ENCODE measurements at regions of chr16 and their contacts with region 1.

Region 1: GRCh38 chr16:1308977-1309885 is at the start of gene UBE2I:
- DNase-seq: peak; percentile 98
- H3K4me3 Mint-ChIP-seq: peak within 1 kb of the TSS; percentile 94
- H3K27ac Mint-ChIP-seq: peak within 1 kb of the TSS; percentile 99
- H3K4me1 Mint-ChIP-seq: peaks cover 41% of the 10 kb centered on the region
- H3K27me3 Mint-ChIP-seq: no peaks in the 10 kb centered on the region
- total RNA-seq, gene UBE2I: 273 to 297 TPM

Region 2: DNA sequence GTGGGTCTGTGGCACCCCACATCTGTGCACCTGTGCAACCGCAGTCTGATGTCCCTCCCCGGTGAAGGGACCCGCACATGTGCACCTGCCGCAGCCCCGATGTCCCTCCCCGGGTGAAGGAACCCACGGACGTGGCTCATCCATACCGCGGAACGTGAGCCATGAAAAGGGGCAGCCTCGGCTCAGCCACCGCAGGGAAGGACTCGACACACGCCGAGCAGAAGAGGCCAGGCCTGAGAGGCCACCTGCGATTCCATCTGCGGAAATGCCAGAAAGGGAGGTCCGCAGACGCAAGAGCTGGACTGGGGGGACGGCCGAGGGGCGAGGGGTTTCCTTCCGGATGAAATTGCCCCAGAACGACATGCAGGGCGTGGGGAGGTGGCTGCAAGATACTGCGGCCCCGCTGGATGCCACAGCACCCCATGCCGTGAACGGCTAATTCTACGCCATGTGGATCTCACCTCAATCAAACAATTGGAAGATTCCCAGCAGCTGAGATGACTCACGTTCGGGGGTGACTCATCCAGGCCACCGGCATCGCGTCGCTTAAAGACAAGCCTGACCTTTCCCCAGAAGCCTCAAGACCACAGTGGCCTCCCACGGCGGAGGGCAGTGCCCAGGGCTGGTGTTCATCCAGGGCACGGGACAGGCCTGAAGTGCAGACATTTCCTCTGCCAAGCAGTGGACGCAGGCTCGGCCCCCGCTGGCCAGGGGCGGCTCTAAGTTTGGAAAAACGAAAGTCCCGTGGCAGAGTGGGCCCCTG is 306.7 kb before region 1 on chr16:
- CTCF ChIA-PET with region 1: no interaction called
- intact Hi-C with region 1: no loop called
- DNase-seq: peak; percentile 94
- H3K4me3 Mint-ChIP-seq: no peak overlapping the region
- H3K27ac Mint-ChIP-seq: peak overlapping the region; percentile 72
- H3K4me1 Mint-ChIP-seq: peaks cover 63% of the 10 kb centered on the region
- H3K27me3 Mint-ChIP-seq: no peaks in the 10 kb centered on the region

Region 3: DNA sequence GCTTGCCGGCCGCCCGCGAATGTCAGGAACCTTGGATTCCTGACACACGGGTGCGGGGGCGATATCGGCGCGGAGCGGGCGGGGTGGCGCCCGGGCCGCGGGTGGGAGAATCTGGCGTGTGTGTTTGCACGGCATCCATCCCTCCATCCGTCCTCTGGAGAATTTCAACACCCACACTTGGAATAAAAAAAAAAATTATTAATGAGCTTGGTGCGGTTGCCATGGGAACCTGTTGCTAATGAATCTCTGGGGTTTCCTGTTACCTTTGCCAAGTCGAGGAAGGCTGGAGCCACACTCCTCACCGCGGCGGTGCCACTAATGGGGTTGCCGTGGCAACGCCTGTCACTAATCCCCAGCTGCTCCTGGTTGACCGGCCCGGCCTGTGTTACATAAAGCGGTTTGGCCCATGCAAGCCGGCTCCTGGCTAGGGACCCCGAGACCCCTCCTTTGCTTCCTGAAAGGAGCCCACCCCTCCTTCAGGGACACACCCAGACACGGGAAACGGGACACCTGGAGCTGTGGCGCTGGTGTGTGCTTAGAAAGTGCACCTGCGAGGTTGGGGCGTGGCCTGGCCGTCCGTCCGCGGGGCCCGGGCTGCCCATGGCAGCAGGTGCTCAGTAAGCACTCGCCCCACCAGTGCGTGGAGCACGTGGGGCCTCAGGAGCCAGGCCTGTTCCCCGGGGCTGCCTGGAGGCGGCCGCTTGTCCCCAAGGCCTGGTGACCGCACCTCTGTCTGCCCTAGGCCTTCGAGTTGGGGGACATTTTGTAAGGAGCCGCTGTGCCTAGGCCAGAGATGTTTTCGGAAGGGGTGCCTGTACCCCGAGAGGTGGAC is 141.7 kb before region 1 on chr16:
- CTCF ChIA-PET with region 1: no interaction called
- intact Hi-C with region 1: no loop called
- DNase-seq: no peak
- H3K4me3 Mint-ChIP-seq: no peak overlapping the region
- H3K27ac Mint-ChIP-seq: no peak overlapping the region
- H3K4me1 Mint-ChIP-seq: no peaks in the 10 kb centered on the region
- H3K27me3 Mint-ChIP-seq: no peaks in the 10 kb centered on the region

Region 4: DNA sequence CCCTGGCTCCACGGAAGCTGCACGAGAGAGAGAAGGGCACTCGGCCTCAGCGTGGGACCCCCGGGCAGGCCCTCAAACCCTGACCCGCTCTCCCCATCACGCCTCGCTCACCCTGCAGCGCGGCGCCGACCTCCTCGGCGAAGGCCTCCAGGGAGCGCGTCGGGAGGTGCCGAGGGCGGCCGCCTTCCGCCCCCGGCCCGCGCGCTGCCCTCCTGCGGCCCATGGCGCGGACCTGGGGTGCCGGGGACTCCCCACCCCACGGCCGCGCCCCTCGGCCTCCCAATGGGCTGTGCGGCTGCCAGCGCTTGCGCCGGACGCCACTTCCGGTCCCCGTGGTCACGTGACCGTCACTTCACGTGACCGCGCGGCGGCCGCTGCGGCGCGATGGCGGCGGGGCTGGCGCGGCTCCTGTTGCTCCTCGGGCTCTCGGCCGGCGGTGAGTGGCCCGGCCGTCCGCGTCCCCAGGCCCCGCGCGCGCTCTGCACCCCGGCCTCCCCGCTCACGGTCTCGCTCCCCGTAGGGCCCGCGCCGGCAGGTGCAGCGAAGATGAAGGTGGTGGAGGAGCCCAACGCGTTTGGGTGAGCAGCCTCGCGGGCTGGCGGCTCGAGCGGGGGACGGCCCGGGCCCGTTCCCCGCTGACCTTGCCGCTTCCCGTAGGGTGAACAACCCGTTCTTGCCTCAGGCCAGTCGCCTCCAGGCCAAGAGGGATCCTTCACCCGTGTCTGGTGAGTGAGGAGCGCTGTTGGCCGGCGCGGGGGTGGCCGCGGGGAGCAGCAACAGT is 42.5 kb after region 1 on chr16 and contains the starts of genes GNPTG and TSR3:
- CTCF ChIA-PET with region 1: no interaction called
- intact Hi-C with region 1: loop called (anchors 1 kb)
- DNase-seq: peak; percentile 82
- H3K4me3 Mint-ChIP-seq: peak within 1 kb of the TSS; percentile 80
- H3K27ac Mint-ChIP-seq: peak within 1 kb of the TSS; percentile 68
- H3K4me1 Mint-ChIP-seq: peaks cover 33% of the 10 kb centered on the region
- H3K27me3 Mint-ChIP-seq: no peaks in the 10 kb centered on the region
- total RNA-seq, gene GNPTG: 15.9 to 17.3 TPM
- total RNA-seq, gene TSR3: 48.5 to 50.7 TPM

Region 5: GRCh38 chr16:1378804-1379303 is 69.6 kb after region 1 on chr16:
- CTCF ChIA-PET with region 1: no interaction called
- intact Hi-C with region 1: loop called (anchors 2 kb)
- DNase-seq: peak; percentile 82
- H3K4me3 Mint-ChIP-seq: peak overlapping the region; percentile 83
- H3K27ac Mint-ChIP-seq: peak overlapping the region; percentile 93
- H3K4me1 Mint-ChIP-seq: peaks cover 17% of the 10 kb centered on the region
- H3K27me3 Mint-ChIP-seq: no peaks in the 10 kb centered on the region

Region 6: GRCh38 chr16:1474796-1475551 is 165.7 kb after region 1 on chr16 and contains the start of gene CLCN7:
- CTCF ChIA-PET with region 1: no interaction called
- intact Hi-C with region 1: no loop called
- DNase-seq: peak; percentile 90
- H3K4me3 Mint-ChIP-seq: peak within 1 kb of the TSS; percentile 85
- H3K27ac Mint-ChIP-seq: peak within 1 kb of the TSS; percentile 82
- H3K4me1 Mint-ChIP-seq: peaks cover 36% of the 10 kb centered on the region
- H3K27me3 Mint-ChIP-seq: no peaks in the 10 kb centered on the region
- total RNA-seq, gene CLCN7: 31.7 to 34.5 TPM

Region 7: GRCh38 chr16:1543085-1543896 is 234.1 kb after region 1 on chr16:
- CTCF ChIA-PET with region 1: no interaction called
- intact Hi-C with region 1: loop called (anchors 2 kb)
- DNase-seq: peak; percentile 84
- H3K4me3 Mint-ChIP-seq: peak overlapping the region; percentile 60
- H3K27ac Mint-ChIP-seq: peak overlapping the region; percentile 89
- H3K4me1 Mint-ChIP-seq: peaks cover 79% of the 10 kb centered on the region
- H3K27me3 Mint-ChIP-seq: no peaks in the 10 kb centered on the region

Region 8: DNA sequence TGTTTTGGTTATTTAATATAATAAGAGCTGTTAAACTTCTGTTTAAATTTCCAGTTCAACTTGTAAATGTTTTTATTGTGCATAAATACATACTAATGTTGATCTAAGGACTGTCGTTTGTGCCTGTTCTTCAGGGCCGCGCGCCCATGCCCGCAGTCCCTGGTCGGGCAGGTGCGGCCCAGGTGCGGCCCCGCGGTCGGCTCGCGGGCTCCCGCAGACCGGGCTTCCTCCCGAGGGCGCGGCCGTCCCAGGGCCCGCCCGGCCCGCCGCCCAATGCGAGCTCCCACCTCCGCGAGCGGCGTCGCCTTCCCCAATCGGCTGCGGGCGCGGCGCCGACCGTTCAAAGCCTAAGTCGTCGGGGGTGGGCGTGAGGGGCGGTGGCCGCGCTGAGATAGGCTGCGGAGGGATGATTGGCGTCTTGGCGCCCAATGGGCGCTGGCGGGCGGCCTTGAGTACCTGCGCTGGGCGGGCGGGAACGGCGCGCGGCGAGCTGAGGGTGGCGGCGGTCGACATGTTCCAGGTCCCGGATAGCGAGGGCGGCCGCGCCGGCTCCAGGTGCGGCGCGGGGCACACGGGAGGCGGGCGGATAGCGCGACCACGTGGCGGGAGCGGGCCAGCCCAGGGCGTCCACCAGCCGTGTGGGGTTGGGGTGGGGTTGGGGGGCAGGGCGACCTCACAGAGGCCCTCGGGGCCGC is 368.7 kb after region 1 on chr16 and contains the start of gene JPT2:
- CTCF ChIA-PET with region 1: no interaction called
- intact Hi-C with region 1: no loop called
- DNase-seq: peak; percentile 98
- H3K4me3 Mint-ChIP-seq: peak within 1 kb of the TSS; percentile 95
- H3K27ac Mint-ChIP-seq: peak within 1 kb of the TSS; percentile 79
- H3K4me1 Mint-ChIP-seq: peaks cover 35% of the 10 kb centered on the region
- H3K27me3 Mint-ChIP-seq: no peaks in the 10 kb centered on the region
- total RNA-seq, gene JPT2: 54.0 to 69.4 TPM

Region 9: DNA sequence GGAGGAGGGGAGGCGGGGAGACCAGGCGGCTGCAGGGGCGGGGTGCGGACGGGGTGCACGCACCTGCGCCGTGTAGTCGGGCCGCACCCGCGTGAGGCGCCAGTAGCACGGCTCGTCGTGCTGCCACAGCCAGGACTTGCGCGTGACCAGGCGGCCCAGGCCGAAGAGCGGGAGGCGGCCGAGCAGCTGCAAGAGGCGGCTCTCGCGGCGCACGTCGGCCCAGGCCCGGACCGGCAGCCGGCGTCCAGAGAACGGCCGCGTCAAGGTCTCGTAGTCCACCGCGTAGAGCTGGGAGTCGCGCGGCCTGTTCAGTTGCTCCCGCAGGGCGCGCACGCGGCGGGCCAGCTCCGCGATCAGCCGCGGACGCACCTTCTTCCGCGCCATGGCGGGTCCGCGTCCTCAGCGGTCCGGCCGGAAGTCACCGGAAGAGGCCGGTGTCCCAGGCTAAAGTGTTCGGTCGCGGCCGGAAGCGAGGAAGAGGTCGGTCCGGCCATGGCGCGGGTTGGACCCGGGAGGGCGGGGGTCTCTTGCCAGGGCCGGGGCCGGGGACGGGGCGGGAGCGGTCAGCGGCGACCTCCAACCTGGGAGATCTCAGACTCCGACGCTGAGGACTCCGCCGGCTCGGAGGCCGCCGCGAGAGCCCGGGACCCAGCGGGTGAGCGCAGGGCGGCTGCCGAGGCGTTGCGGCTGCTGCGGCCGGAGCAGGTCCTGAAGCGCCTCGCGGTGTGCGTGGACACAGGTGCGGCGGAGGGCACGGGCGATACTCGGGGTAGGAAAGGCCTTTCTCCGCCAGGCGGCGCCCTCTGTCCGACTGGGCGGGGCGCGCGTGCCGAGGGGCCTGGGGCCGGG is 463.7 kb after region 1 on chr16 and contains the starts of genes EME2 and MRPS34:
- CTCF ChIA-PET with region 1: no interaction called
- intact Hi-C with region 1: loop called (anchors 2 kb)
- DNase-seq: peak; percentile 85
- H3K4me3 Mint-ChIP-seq: peak within 1 kb of the TSS; percentile 93
- H3K27ac Mint-ChIP-seq: peak within 1 kb of the TSS; percentile 93
- H3K4me1 Mint-ChIP-seq: peaks cover 7% of the 10 kb centered on the region
- H3K27me3 Mint-ChIP-seq: no peaks in the 10 kb centered on the region
- total RNA-seq, gene EME2: 7.7 to 7.8 TPM
- total RNA-seq, gene MRPS34: 122 to 138 TPM

Measured in activated naive CD4-positive, alpha-beta T cell treated with anti-CD3 and anti-CD28 coated beads for 36 hours (primary cell).